ENCODE measurements at regions of chr11 and their contacts with region 1.

Region 1: GRCh38 chr11:77669848-77670511 is 32.4 kb upstream of the CLNS1A start:
- DNase-seq: peak in 1 of 2 experiments; percentile 60
- H3K4me3 ChIP-seq: no peak overlapping the region
- H3K4me3 Mint-ChIP-seq: peak overlapping the region; percentile 21
- H3K27ac Mint-ChIP-seq: peak overlapping the region; percentile 64
- H3K4me1 ChIP-seq: peaks cover 14% of the 10 kb centered on the region
- H3K4me1 Mint-ChIP-seq: peaks cover 15% of the 10 kb centered on the region
- H3K27me3 ChIP-seq: no peaks in the 10 kb centered on the region
- H3K27me3 Mint-ChIP-seq: no peaks in the 10 kb centered on the region
- CTCF ChIP-seq: no peak

Region 2: DNA sequence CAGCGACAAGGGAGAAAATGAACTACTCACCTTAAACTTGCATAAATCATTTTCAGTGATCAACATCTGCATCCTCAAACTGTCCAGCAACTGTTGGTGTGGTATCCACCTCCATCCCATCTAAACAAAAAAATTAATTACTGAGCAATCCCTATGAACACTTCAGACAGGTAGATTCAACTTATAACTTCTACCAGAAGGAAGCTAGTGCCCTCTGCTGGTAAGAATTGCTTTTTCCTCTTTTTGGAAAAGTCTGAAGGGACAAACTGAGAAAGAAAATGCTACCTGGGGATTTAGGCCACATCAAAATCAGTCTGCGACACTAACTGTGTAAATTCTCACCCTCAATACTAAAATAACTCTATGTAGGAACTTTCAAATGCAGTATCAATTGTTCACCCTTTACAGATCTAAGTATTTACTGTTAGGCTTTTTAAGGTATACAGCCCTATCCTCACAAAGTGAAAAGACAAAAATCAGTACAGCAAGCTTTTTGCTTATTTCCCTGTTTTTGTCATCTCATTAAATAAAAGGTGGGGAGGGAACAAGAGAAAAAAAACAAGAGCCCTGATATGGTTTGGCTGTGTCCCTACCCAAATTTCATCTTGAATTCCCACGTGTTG is 50.3 kb before region 1 on chr11:
- CTCF ChIA-PET with region 1: no interaction called
- POLR2A ChIA-PET with region 1: no interaction called
- intact Hi-C with region 1: no loop called
- DNase-seq: peak in 1 of 2 experiments; percentile 82
- H3K4me3 ChIP-seq: no peak overlapping the region
- H3K4me3 Mint-ChIP-seq: no peak overlapping the region
- H3K27ac Mint-ChIP-seq: no peak overlapping the region
- H3K4me1 ChIP-seq: no peaks in the 10 kb centered on the region
- H3K4me1 Mint-ChIP-seq: no peaks in the 10 kb centered on the region
- H3K27me3 ChIP-seq: no peaks in the 10 kb centered on the region
- H3K27me3 Mint-ChIP-seq: no peaks in the 10 kb centered on the region
- CTCF ChIP-seq: peak; percentile 85 to 90

Region 3: DNA sequence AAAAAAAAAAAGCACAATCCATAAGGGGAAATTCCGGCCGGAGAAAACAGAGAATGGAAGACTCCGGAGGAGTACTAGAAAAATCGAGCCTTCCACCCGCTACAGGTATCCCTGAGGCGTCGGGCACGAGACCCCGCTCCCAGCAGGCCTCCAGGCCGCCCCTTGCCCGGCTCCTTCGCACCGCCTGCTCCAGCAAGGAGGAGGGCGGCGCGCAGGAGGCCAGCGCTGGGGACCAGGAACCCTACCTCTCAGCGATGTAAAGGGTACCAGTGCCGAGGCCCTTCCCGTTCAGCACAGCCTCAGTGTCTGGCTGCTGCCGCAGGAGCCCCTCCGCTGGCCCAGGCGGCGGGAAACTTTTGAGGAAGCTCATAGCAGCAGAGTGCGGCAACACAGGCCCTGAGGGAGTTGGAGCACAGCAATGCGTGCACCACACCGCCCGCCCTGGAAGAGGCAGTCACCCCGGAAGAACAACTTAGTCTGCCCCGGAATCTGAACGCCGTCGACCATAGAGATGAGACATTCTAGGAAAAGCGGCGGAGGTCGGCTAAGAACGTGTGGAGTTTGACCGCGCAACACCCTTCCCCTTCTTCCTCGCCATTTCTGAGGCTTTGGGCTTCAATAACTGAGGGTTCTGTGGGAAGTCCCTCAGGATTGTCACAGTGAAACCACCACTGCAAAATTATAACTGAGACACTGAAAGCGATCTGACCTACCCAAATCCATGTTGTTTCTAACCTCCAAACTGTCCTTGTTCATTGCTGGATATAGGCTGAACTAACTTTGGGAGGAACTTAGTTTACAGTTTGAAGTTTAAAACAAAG is 32.4 kb before region 1 on chr11 and contains the start of gene CLNS1A:
- CTCF ChIA-PET with region 1: no interaction called
- POLR2A ChIA-PET with region 1: no interaction called
- intact Hi-C with region 1: loop called (anchors 1 kb)
- DNase-seq: peak; percentile 95 to 96
- H3K4me3 ChIP-seq: peak within 1 kb of the TSS; percentile 80
- H3K4me3 Mint-ChIP-seq: peak within 1 kb of the TSS; percentile 88
- H3K27ac Mint-ChIP-seq: peak within 1 kb of the TSS; percentile 85
- H3K4me1 ChIP-seq: peaks cover 4% of the 10 kb centered on the region
- H3K4me1 Mint-ChIP-seq: peaks cover 15% of the 10 kb centered on the region
- H3K27me3 ChIP-seq: no peaks in the 10 kb centered on the region
- H3K27me3 Mint-ChIP-seq: no peaks in the 10 kb centered on the region
- CTCF ChIP-seq: peak in 1 of 2 experiments; percentile 8
- total RNA-seq, gene CLNS1A: 282 and 306 TPM in 2 replicates

Region 4: DNA sequence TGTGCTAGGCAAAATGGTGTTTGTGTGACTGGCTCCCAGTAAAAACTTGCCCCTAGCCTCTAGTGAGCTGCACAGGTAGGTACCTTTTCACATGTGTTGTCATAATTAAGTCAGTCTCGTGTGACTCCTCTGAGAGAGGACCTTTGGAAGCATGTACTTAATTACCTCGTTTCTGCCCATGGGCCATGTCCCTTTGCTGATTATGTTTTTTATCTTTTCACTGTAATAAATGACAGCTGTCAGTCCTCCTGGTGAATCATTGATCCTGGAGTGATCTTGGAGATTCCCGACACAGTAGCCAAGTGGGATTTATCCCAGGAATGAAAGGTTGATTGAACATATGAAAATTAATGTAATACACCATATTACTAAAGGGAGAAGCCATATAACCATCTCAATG is 19.9 kb before region 1 on chr11:
- CTCF ChIA-PET with region 1: no interaction called
- POLR2A ChIA-PET with region 1: no interaction called
- intact Hi-C with region 1: loop called (anchors 2 kb)
- DNase-seq: no peak
- H3K4me3 ChIP-seq: no peak overlapping the region
- H3K4me3 Mint-ChIP-seq: no peak overlapping the region
- H3K27ac Mint-ChIP-seq: no peak overlapping the region
- H3K4me1 ChIP-seq: 0 out of 2 replicates have a peak, but pooled peaks cover 4% of the 10 kb centered on the region
- H3K4me1 Mint-ChIP-seq: no peaks in the 10 kb centered on the region
- H3K27me3 ChIP-seq: no peaks in the 10 kb centered on the region
- H3K27me3 Mint-ChIP-seq: no peaks in the 10 kb centered on the region
- CTCF ChIP-seq: no peak